Right cardiac atrium (tissue), 5 donors: ENCODE measurements at regions of chr5 and their contacts with region 1.

Region 1: DNA sequence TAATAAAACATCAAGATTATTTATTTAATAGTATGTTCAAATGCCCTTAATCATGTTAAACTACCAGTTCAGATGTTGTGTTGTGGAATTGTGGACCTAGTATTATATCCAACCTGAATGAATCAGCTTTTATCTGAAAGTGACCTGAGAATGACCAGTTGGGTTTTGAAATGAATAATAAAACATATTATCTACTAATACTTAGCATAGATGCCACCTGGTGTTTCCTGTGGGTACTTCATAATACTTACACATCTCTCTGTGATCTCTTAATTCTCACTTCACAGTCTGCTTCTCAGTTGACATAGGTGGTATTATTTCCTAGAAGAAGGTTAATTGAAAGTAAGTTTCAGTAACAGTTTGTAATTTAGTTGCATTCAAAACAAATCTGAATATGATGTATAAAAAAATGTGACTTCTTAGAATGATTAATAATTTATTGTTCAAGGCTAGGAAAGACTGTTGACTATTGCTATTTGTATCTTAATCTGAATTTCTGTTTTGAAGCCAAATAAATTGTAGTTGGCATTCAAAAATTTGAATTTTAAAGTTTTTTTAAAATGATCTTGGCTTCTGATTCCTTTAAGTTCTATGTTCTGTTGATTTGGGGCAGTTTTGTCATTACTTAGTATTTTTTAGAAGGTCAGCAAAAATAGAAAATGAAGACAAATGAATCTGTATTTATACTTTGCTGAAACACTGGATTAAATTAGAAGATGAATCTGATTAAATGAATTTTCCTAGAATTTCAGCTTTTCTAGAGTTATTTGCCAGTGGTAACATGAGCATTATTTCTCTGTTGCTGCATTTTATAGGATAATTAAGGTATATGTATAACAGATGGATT is 48.2 kb downstream of the KIF2A start:
- DNase-seq: no peak
- ATAC-seq: peak; percentile 40 to 52
- H3K4me3 ChIP-seq: no peak overlapping the region
- H3K27ac ChIP-seq: no peak overlapping the region
- H3K4me1 ChIP-seq: no peaks in the 10 kb centered on the region
- H3K27me3 ChIP-seq: no peaks in the 10 kb centered on the region

Region 2: DNA sequence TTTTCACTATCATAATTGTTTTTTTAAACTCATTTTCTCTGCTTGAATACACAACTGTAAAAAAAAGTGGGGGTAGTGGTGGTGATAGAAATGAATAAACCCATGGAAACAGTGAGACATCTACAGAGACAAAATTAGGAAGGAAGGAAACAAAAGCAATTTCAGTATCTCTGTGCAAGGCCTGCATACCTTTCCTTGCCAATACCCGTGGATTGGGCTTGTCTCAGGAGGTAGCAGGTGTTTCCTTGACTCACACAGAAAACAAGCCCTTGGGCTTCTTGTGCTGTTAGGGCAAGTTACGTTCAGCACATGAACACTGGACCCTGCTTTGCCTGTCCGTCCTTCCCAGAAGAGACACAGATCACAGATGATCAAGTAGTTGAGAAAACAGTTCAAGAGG is 650.0 kb before region 1 on chr5:
- intact Hi-C with region 1: no loop called
- DNase-seq: no peak
- ATAC-seq: no peak
- H3K4me3 ChIP-seq: no peak overlapping the region
- H3K27ac ChIP-seq: no peak overlapping the region
- H3K4me1 ChIP-seq: no peaks in the 10 kb centered on the region
- H3K27me3 ChIP-seq: no peaks in the 10 kb centered on the region

Region 3: GRCh38 chr5:62214701-62215100 is 139.6 kb before region 1 on chr5:
- intact Hi-C with region 1: loop called in 1 of 4 experiments (anchors 10 kb)
- DNase-seq: no peak
- ATAC-seq: no peak
- H3K4me3 ChIP-seq: no peak overlapping the region
- H3K27ac ChIP-seq: no peak overlapping the region
- H3K4me1 ChIP-seq: no peaks in the 10 kb centered on the region
- H3K27me3 ChIP-seq: no peaks in the 10 kb centered on the region

Region 4: GRCh38 chr5:62231576-62231975 is 122.7 kb before region 1 on chr5:
- intact Hi-C with region 1: loop called in 2 of 4 experiments (anchors 10 kb)
- DNase-seq: no peak
- ATAC-seq: no peak
- H3K4me3 ChIP-seq: no peak overlapping the region
- H3K27ac ChIP-seq: no peak overlapping the region
- H3K4me1 ChIP-seq: peaks cover under 1% of the 10 kb centered on the region
- H3K27me3 ChIP-seq: no peaks in the 10 kb centered on the region

Region 5: GRCh38 chr5:63262185-63262981 is 908.1 kb after region 1 on chr5:
- intact Hi-C with region 1: no loop called
- DNase-seq: no peak
- ATAC-seq: peak in 1 of 2 donors; percentile 59
- H3K4me3 ChIP-seq: no peak overlapping the region
- H3K27ac ChIP-seq: no peak overlapping the region
- H3K4me1 ChIP-seq: no peaks in the 10 kb centered on the region
- H3K27me3 ChIP-seq: no peaks in the 10 kb centered on the region